T-cell (primary cell): ENCODE measurements at regions of chr5 and their contacts with region 1.

Region 1: DNA sequence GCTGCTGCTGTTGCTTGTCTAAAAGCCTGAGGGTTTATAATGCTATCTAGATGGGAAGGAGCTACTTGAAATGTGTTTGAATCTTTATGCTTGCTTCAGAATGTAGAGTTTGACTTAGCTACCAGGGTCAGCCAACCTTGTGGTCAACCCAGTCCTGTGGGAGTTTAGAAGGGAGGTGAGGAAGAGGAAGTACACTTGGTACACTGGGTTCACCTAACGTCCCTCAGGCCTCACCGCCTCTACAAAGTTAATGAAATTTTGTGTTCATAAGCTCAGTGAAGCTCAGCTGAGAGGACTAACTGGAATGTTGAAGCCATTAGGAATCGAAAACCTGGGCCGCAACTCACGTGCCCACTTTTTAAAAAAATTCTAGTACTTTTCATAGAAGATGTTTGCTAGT is 10.7 kb downstream of the IQGAP2 start:
- DNase-seq: no peak
- ATAC-seq: no peak
- H3K4me3 ChIP-seq: no peak overlapping the region
- H3K4me3 Mint-ChIP-seq: no peak overlapping the region
- H3K27ac ChIP-seq: no peak overlapping the region
- H3K27ac Mint-ChIP-seq: peak overlapping the region in 1 of 2 donors; percentile 29
- H3K4me1 ChIP-seq: peaks cover 2 to 21% of the 10 kb centered on the region in 2 experiments
- H3K4me1 Mint-ChIP-seq: peaks cover 78 to 80% (median 79%) of the 10 kb centered on the region in 3 donors
- H3K27me3 ChIP-seq: no peaks in the 10 kb centered on the region
- H3K27me3 Mint-ChIP-seq: no peaks in the 10 kb centered on the region

Region 2: DNA sequence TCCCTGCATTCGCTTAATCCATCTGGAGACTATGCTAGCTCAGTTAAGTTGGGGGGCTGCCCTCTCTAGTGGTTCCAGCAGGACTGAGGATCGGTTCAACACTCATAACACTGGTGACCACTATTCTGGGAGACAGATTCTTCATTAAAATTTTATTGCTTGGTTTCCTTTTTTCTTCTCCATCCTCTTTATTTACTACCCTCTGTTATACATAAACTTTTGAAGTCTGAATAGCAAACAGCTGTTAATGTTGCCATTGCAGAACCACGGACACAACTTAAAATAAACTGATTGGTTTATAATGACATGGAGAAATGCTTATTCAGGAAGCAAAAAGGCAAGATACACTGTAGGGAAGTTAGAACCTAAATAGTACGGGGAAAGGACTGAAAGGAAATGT is 11.4 kb after region 1 on chr5:
- CTCF ChIA-PET with region 1: interaction called in 1 of 2 experiments, 11 read pairs
- POLR2A ChIA-PET with region 1: no interaction called
- DNase-seq: no peak
- ATAC-seq: no peak
- H3K4me3 ChIP-seq: no peak overlapping the region
- H3K4me3 Mint-ChIP-seq: peak overlapping the region in 1 of 3 donors; percentile 1
- H3K27ac ChIP-seq: no peak overlapping the region
- H3K27ac Mint-ChIP-seq: peak overlapping the region; percentile 32 to 62
- H3K4me1 ChIP-seq: peaks cover 4 to 31% of the 10 kb centered on the region in 2 experiments
- H3K4me1 Mint-ChIP-seq: peaks cover 55 to 81% (median 79%) of the 10 kb centered on the region in 3 donors
- H3K27me3 ChIP-seq: no peaks in the 10 kb centered on the region
- H3K27me3 Mint-ChIP-seq: no peaks in the 10 kb centered on the region

Region 3: DNA sequence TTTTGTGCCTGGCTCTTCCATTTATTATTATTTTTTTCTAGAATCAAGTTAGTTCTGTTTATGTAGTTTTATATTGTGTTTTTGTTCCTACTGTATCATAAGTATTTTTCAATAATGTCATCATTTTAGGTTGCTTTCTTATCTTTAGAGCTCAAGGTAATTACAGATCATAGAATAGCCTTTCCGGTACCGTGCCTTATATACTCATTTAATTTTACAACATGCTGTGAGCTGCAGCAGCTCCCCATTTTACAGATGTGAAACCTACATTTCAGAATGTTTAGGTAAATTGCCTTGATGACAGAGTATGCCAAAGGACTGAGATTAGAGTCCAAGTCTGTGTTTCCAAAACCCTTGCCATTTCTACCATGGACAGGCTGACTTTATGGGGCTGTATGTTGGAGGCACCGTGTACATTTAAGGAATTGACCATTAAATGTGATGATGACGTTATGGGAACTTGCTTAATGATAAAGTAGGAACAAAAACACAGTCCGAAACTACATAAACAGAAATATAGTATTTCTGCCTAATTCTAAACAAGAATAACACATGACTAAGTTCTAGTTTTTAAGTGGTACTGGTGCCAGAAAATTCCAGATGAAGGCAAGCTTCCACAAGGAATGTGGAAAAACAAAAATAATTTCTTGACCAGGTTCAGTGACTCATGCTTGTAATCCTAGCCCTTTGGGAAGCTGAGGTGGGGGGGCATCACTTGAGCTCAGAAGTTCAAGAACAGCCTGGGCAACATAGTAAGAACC is 87.1 kb after region 1 on chr5:
- CTCF ChIA-PET with region 1: no interaction called
- POLR2A ChIA-PET with region 1: no interaction called
- DNase-seq: no peak
- ATAC-seq: no peak
- H3K4me3 ChIP-seq: no peak overlapping the region
- H3K4me3 Mint-ChIP-seq: no peak overlapping the region
- H3K27ac ChIP-seq: no peak overlapping the region
- H3K27ac Mint-ChIP-seq: no peak overlapping the region
- H3K4me1 ChIP-seq: peaks cover 0 to 18% of the 10 kb centered on the region in 2 experiments
- H3K4me1 Mint-ChIP-seq: peaks cover 60 to 72% (median 70%) of the 10 kb centered on the region in 3 donors
- H3K27me3 ChIP-seq: no peaks in the 10 kb centered on the region
- H3K27me3 Mint-ChIP-seq: no peaks in the 10 kb centered on the region